ENCODE measurements at regions of chr18 and their contacts with region 1.

Region 1: GRCh38 chr18:71105078-71105819 is 816.4 kb downstream of the SOCS6 start:
- DNase-seq: peak in 1 of 5 donors; percentile 8
- ATAC-seq: peak in 2 of 4 donors; percentile 32 to 33
- H3K4me3 ChIP-seq: peak overlapping the region in 1 of 12 donors; percentile 14
- H3K27ac ChIP-seq: peak overlapping the region in 11 of 12 donors; percentile 3 to 74 (median 31)
- H3K4me1 ChIP-seq: peaks cover 0 to 24% (median 0%) of the 10 kb centered on the region in 12 donors
- H3K27me3 ChIP-seq: no peaks in the 10 kb centered on the region
- CTCF ChIP-seq: no peak
- POLR2A ChIP-seq: no peak

Region 2: DNA sequence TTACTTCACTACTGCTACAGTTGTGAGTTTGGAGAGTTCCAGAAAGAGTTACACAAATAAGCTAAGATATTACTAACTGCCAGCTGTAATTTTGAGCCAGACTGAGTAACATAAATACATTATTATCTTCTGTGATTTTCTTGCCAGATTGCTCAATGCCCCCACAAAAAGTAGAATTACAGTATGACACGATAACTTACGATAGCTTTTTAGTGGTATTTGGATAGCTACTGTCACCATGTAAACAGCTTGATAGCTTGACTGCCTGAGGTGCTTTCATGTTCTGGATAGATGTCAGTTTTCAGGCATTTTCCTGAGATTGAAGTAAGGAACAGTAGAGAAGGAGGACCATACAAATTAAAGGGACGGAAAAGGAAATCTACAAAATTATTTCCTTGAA is 283.1 kb before region 1 on chr18:
- intact Hi-C with region 1: no loop called
- DNase-seq: no peak
- ATAC-seq: no peak
- H3K4me3 ChIP-seq: no peak overlapping the region
- H3K27ac ChIP-seq: no peak overlapping the region
- H3K4me1 ChIP-seq: no peaks in the 10 kb centered on the region
- H3K27me3 ChIP-seq: no peaks in the 10 kb centered on the region
- CTCF ChIP-seq: no peak
- POLR2A ChIP-seq: no peak

Region 3: DNA sequence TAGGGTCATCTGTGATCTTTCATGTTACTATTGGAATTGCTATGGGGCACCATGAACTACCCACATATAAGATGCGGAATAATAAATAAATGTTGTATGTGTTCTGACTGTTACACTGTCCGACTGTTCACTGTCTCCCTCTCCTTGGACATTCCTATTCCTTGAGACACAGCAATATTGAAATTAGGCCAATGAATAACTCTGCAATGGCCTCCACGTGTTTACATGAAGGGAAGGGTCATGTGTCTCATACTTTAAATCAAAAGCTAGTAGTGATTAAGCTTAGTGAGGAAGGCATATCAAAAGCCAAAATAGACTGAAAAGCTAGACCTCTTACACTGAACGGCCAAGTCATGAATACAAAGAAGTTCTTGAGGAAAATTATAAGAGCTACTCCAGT is 65.1 kb before region 1 on chr18:
- intact Hi-C with region 1: loop called in 1 of 10 experiments (anchors 10 kb)
- DNase-seq: no peak
- ATAC-seq: no peak
- H3K4me3 ChIP-seq: no peak overlapping the region
- H3K27ac ChIP-seq: no peak overlapping the region
- H3K4me1 ChIP-seq: no peaks in the 10 kb centered on the region
- H3K27me3 ChIP-seq: no peaks in the 10 kb centered on the region
- CTCF ChIP-seq: no peak
- POLR2A ChIP-seq: no peak

Region 4: GRCh38 chr18:71431171-71431570 is 325.9 kb after region 1 on chr18:
- intact Hi-C with region 1: no loop called
- DNase-seq: no peak
- ATAC-seq: no peak
- H3K4me3 ChIP-seq: no peak overlapping the region
- H3K27ac ChIP-seq: no peak overlapping the region
- H3K4me1 ChIP-seq: no peaks in the 10 kb centered on the region
- H3K27me3 ChIP-seq: no peaks in the 10 kb centered on the region
- CTCF ChIP-seq: no peak
- POLR2A ChIP-seq: no peak

Region 5: DNA sequence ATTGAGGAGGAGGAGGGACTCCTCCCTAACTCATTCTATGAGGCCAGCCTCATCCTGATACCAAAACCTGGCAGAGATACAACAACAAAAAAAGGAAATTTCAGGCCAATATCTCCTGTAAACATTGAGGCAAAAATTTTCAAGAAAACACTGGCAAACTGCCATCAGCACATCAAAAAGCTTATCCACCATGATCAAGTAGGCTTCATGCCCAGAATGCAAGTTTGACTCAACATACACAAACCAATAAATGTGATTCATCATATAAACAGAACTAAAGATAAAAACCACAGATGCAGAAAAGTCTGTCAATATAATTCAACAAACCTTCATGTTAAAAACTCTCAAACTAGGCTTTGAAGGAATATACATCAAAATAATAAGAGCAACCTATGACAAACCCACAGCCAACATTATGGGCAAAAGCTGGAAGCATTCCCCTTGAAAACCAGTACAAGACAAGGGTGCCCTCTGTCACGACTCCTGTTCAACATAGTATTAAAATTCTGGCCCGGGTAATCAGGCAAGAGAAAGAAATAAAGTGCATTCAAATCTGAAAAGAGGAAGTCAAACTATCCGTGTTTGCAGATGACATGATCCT is 424.6 kb after region 1 on chr18:
- intact Hi-C with region 1: no loop called
- DNase-seq: no peak
- ATAC-seq: no peak
- H3K4me3 ChIP-seq: no peak overlapping the region
- H3K27ac ChIP-seq: no peak overlapping the region
- H3K4me1 ChIP-seq: no peaks in the 10 kb centered on the region
- H3K27me3 ChIP-seq: no peaks in the 10 kb centered on the region
- CTCF ChIP-seq: no peak
- POLR2A ChIP-seq: no peak

Measured in heart left ventricle (tissue), 16 donors.